ENCODE measurements at regions of chr1 and their contacts with region 1.

Region 1: GRCh38 chr1:15741183-15741850 is 982 bp upstream of the TMEM82 start:
- DNase-seq: peak; percentile 79
- ATAC-seq: peak; percentile 91
- H3K4me3 ChIP-seq: no peak overlapping the region
- H3K4me3 Mint-ChIP-seq: no peak overlapping the region
- H3K27ac ChIP-seq: no peak overlapping the region
- H3K27ac Mint-ChIP-seq: no peak overlapping the region
- H3K4me1 ChIP-seq: peaks cover 0 to 7% of the 10 kb centered on the region in 2 donors
- H3K4me1 Mint-ChIP-seq: peaks cover 6% of the 10 kb centered on the region
- H3K27me3 ChIP-seq: no peaks in the 10 kb centered on the region
- H3K27me3 Mint-ChIP-seq: no peaks in the 10 kb centered on the region
- CTCF ChIP-seq: peak; percentile 80

Region 2: DNA sequence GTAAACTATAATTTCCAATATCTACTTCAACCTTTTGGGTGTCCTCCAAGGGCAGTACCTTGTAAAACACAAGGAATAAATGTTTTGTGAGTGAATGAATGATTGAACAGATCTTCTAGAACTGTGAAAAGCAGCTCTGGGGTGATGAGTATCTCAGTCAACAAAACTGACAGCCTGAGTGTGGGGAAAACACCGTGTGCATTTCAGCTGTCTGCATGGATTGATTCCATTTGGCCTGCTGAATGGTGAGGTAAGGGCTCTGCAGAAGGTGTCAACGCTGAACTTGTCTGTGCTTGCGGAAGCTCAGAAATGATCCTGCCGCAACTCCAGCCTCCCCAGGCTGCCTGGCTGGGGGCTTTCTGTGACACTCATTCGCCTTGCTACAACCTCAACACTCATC is 149.0 kb before region 1 on chr1:
- CTCF ChIA-PET with region 1: interaction called, 75 read pairs
- POLR2A ChIA-PET with region 1: interaction called, 3 read pairs
- intact Hi-C with region 1: no loop called
- DNase-seq: no peak
- ATAC-seq: no peak
- H3K4me3 ChIP-seq: no peak overlapping the region
- H3K4me3 Mint-ChIP-seq: no peak overlapping the region
- H3K27ac ChIP-seq: no peak overlapping the region
- H3K27ac Mint-ChIP-seq: no peak overlapping the region
- H3K4me1 ChIP-seq: no peaks in the 10 kb centered on the region
- H3K4me1 Mint-ChIP-seq: no peaks in the 10 kb centered on the region
- H3K27me3 ChIP-seq: no peaks in the 10 kb centered on the region
- H3K27me3 Mint-ChIP-seq: no peaks in the 10 kb centered on the region
- CTCF ChIP-seq: no peak

Region 3: GRCh38 chr1:15668089-15668754 is 73.1 kb before region 1 on chr1:
- CTCF ChIA-PET with region 1: interaction called, 7 read pairs
- POLR2A ChIA-PET with region 1: no interaction called
- intact Hi-C with region 1: loop called (anchors 5 kb)
- DNase-seq: no peak
- ATAC-seq: no peak
- H3K4me3 ChIP-seq: no peak overlapping the region
- H3K4me3 Mint-ChIP-seq: no peak overlapping the region
- H3K27ac ChIP-seq: no peak overlapping the region
- H3K27ac Mint-ChIP-seq: no peak overlapping the region
- H3K4me1 ChIP-seq: no peaks in the 10 kb centered on the region
- H3K4me1 Mint-ChIP-seq: peaks cover 3% of the 10 kb centered on the region
- H3K27me3 ChIP-seq: no peaks in the 10 kb centered on the region
- H3K27me3 Mint-ChIP-seq: no peaks in the 10 kb centered on the region
- CTCF ChIP-seq: no peak

Region 4: DNA sequence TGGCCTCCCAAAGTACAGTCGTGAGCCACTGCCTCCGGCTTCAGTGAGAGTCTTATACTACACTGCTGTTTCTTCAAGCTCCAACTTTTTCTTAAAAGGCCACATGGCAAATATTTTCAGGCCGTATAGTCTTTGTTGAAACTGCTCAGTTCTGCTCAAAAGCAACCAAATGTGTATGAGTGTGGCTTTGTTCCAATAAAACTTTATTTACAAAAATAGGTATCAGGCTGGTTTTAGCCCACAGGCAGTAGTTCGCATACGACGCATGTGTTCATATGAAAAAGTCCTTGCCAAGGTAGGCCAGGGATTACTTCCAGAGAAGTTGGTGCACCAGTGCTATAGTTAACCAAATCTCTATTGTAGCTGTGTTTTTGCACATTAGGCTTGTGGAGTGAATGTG is 51.0 kb before region 1 on chr1:
- CTCF ChIA-PET with region 1: no interaction called
- POLR2A ChIA-PET with region 1: no interaction called
- intact Hi-C with region 1: no loop called
- DNase-seq: no peak
- ATAC-seq: no peak
- H3K4me3 ChIP-seq: no peak overlapping the region
- H3K4me3 Mint-ChIP-seq: no peak overlapping the region
- H3K27ac ChIP-seq: no peak overlapping the region
- H3K27ac Mint-ChIP-seq: no peak overlapping the region
- H3K4me1 ChIP-seq: peaks cover 18 to 26% of the 10 kb centered on the region in 2 donors
- H3K4me1 Mint-ChIP-seq: peaks cover 64% of the 10 kb centered on the region
- H3K27me3 ChIP-seq: no peaks in the 10 kb centered on the region
- H3K27me3 Mint-ChIP-seq: no peaks in the 10 kb centered on the region
- CTCF ChIP-seq: no peak

Region 5: GRCh38 chr1:15803354-15803753 is 62.0 kb after region 1 on chr1:
- CTCF ChIA-PET with region 1: no interaction called
- POLR2A ChIA-PET with region 1: no interaction called
- intact Hi-C with region 1: no loop called
- DNase-seq: peak; percentile 68
- ATAC-seq: peak; percentile 53
- H3K4me3 ChIP-seq: no peak overlapping the region
- H3K4me3 Mint-ChIP-seq: no peak overlapping the region
- H3K27ac ChIP-seq: no peak overlapping the region
- H3K27ac Mint-ChIP-seq: no peak overlapping the region
- H3K4me1 ChIP-seq: no peaks in the 10 kb centered on the region
- H3K4me1 Mint-ChIP-seq: no peaks in the 10 kb centered on the region
- H3K27me3 ChIP-seq: peaks cover 0 to 2% (median 0%) of the 10 kb centered on the region in 4 experiments
- H3K27me3 Mint-ChIP-seq: peaks cover 7% of the 10 kb centered on the region
- CTCF ChIP-seq: peak; percentile 67